Heart right ventricle (tissue), 16 donors: ENCODE measurements at regions of chr11 and their contacts with region 1.

Region 1: GRCh38 chr11:113896156-113896879 is 8.3 kb upstream of the HTR3B start:
- DNase-seq: no peak
- ATAC-seq: peak; percentile 38 to 81 (median 67)
- H3K4me3 ChIP-seq: no peak overlapping the region
- H3K27ac ChIP-seq: no peak overlapping the region
- H3K4me1 ChIP-seq: peaks cover 0 to 20% (median 8%) of the 10 kb centered on the region in 9 donors
- H3K27me3 ChIP-seq: no peaks in the 10 kb centered on the region
- CTCF ChIP-seq: peak; percentile 35 to 85 (median 72)

Region 2: GRCh38 chr11:113994077-113994954 is 98.0 kb after region 1 on chr11:
- intact Hi-C with region 1: loop called in 7 of 10 experiments (anchors 5 to 10 kb)
- DNase-seq: peak in 1 of 2 donors; percentile 18
- ATAC-seq: peak in 3 of 8 donors; percentile 31 to 51 (median 43)
- H3K4me3 ChIP-seq: no peak overlapping the region
- H3K27ac ChIP-seq: no peak overlapping the region
- H3K4me1 ChIP-seq: no peaks in the 10 kb centered on the region
- H3K27me3 ChIP-seq: peaks cover 0 to 49% (median 21%) of the 10 kb centered on the region in 7 donors
- CTCF ChIP-seq: peak; percentile 51 to 78 (median 73)

Region 3: DNA sequence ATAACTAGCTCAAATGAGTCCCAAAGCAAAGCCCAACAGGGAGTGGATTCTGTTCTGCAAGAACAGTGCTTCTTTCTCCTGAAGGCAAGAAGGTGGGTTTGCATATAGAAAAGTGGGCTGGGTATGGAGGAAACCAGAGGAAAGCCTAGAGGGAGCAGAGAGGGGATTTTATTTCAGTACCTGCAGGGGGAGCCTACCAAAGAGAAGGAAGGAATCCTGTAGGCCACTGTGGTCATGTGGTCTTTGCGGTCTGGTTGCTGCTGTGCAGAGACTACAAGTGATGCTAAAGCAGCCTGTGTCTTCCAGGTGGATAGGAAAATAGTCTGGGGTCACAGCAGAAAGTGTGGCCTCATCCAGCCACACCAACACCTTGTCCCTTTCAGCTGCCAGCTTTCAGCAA is 130.0 kb after region 1 on chr11:
- intact Hi-C with region 1: loop called in 5 of 10 experiments (anchors 5 to 10 kb)
- DNase-seq: no peak
- ATAC-seq: peak in 1 of 8 donors; percentile 7
- H3K4me3 ChIP-seq: no peak overlapping the region
- H3K27ac ChIP-seq: no peak overlapping the region
- H3K4me1 ChIP-seq: peaks cover 0 to 12% (median 0%) of the 10 kb centered on the region in 9 donors
- H3K27me3 ChIP-seq: no peaks in the 10 kb centered on the region
- CTCF ChIP-seq: no peak

Region 4: DNA sequence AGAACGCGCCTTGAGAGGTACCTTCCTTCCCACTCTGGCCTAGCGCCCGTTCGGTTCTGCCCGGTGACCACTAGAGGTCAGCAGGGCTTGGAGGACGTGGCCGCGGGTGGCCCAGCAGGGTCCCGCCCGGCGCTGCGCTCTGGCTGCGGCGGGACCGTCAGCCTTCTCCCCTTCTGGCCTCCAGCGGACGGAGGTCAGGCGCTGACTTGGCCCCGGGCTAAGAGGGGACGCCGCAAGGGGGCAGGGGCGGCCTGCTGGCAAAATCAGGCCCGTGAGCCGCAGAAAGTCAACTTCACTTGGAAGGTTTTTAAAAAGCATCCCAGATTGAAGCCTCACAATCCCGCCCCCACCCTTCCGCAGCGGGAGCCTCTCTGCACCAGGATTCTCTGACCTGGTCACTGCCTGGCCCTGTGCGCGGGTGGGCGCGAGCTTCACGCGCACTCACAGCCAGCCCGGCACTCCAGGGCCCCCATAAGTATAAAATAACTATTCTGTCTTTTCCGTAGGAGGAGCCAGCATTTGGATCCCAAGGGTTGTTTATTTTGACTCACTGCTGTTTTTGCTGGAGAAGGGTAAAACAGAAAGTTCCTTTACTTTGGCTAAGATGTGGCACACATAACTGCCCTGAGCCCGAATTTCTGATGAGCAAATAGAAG is 140.0 kb after region 1 on chr11:
- intact Hi-C with region 1: loop called in 2 of 10 experiments (anchors 10 kb)
- DNase-seq: peak; percentile 84 to 89
- ATAC-seq: peak; percentile 92 to 97 (median 95)
- H3K4me3 ChIP-seq: peak overlapping the region in 9 of 10 donors; percentile 15 to 58 (median 50)
- H3K27ac ChIP-seq: peak overlapping the region in 9 of 10 donors; percentile 23 to 80 (median 67)
- H3K4me1 ChIP-seq: peaks cover 0 to 19% (median 13%) of the 10 kb centered on the region in 9 donors
- H3K27me3 ChIP-seq: no peaks in the 10 kb centered on the region
- CTCF ChIP-seq: peak; percentile 70 to 98 (median 95)

Region 5: DNA sequence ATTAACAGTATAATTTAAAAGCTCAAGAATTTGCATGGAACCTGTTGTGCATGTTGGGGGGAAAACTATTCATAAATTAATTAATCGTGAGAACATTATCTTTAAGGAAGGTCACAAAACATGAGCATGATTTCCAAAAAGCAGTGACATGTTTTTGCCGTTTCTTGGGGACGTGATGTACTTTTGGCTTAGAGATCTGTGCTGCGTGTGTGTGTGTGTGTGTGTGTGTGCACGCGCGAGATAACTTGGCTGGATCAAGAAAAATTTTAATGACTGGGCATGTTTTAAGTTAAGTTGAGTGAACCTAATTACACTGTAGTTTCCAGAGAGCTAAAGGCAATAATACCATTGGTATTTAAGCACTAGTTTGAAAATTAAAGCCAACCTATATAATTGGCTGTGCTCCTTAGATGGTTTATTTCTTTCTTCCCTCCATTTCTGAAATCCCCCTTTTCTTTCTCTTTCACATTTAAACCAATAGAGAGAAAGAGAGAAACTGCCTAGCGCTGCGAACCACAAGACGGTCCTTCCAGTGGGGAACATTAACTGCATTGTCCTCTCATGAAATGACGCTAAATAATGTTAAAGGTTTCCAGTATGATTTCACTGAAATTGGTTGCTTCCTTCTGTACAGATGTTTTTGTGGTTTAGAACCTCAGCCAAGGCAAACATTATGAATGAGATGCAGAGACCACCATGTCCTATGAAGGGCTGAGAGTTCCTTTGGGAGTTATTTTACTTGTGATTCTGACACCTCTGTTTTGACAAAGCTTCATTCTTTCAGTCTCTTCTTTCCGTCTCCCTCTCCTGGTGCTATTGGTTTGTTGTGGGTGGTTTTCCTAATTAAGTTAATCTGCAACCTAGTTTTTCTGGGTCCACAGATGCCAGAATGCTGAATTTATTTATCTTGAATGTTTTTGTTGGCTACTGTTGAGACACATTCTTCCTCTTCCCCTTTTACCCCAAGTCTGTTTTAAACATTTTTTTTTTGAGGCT is 214.9 kb after region 1 on chr11:
- intact Hi-C with region 1: loop called in 1 of 10 experiments (anchors 5 kb)
- DNase-seq: peak; percentile 40 to 58
- ATAC-seq: peak in 7 of 8 donors; percentile 35 to 72 (median 57)
- H3K4me3 ChIP-seq: peak overlapping the region in 8 of 10 donors; percentile 3 to 40 (median 32)
- H3K27ac ChIP-seq: peak overlapping the region; percentile 50 to 85 (median 75)
- H3K4me1 ChIP-seq: peaks cover 34 to 97% (median 85%) of the 10 kb centered on the region in 9 donors
- H3K27me3 ChIP-seq: no peaks in the 10 kb centered on the region
- CTCF ChIP-seq: peak in 2 of 9 donors; percentile 17 to 19

Region 6: GRCh38 chr11:114262681-114263512 is 366.6 kb after region 1 on chr11:
- intact Hi-C with region 1: loop called (anchors 1 to 5 kb)
- DNase-seq: peak in 1 of 2 donors; percentile 43
- ATAC-seq: peak; percentile 26 to 57 (median 50)
- H3K4me3 ChIP-seq: no peak overlapping the region
- H3K27ac ChIP-seq: peak overlapping the region in 1 of 10 donors; percentile 28
- H3K4me1 ChIP-seq: peaks cover 19 to 48% (median 39%) of the 10 kb centered on the region in 9 donors
- H3K27me3 ChIP-seq: no peaks in the 10 kb centered on the region
- CTCF ChIP-seq: peak; percentile 38 to 81 (median 70)